ENCODE measurements at regions of chr20 and their contacts with region 1.

Region 1: DNA sequence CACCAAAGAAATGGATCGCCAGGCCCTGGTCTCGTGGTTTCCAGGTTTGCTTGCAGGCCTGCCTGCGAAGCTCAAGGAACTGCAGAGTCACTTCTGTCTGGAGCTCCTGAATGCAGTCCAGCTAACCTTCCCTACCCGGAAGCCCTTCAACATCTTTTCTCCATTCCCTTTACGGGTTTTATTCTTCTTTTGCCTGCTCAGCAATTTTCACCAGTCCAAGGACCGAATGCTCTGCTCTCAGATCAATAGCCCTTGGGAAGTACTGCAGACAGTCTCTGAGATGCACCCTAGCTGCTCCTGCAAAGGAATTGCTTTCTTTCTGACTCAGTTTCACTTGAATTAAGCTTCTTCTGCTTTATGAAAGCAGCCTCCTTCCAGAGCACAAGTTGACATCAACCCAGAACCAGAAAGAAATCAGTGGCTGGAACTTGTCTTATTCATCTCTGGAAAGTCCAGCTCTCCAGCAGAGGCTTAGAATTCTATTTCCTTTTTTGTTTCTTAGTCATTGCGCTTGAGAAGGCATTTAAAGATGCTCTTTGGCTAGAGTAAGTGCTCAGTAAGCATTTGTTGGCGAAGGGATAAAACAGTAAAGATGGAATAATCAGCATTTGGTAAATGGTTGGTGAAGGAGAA is 18.7 kb upstream of the YWHAB start:
- DNase-seq: no peak
- ATAC-seq: no peak
- H3K4me3 Mint-ChIP-seq: peak overlapping the region; percentile 52
- H3K27ac Mint-ChIP-seq: no peak overlapping the region
- H3K4me1 Mint-ChIP-seq: peaks cover 12% of the 10 kb centered on the region
- H3K27me3 Mint-ChIP-seq: peaks cover 3% of the 10 kb centered on the region
- CTCF ChIP-seq: no peak

Region 2: GRCh38 chr20:44800398-44801046 is 66.3 kb before region 1 on chr20:
- CTCF ChIA-PET with region 1: interaction called, 20 read pairs
- POLR2A ChIA-PET with region 1: no interaction called
- intact Hi-C with region 1: loop called (anchors 5 kb)
- DNase-seq: peak; percentile 59
- ATAC-seq: no peak
- H3K4me3 Mint-ChIP-seq: no peak overlapping the region
- H3K27ac Mint-ChIP-seq: no peak overlapping the region
- H3K4me1 Mint-ChIP-seq: no peaks in the 10 kb centered on the region
- H3K27me3 Mint-ChIP-seq: peaks cover 11% of the 10 kb centered on the region
- CTCF ChIP-seq: peak; percentile 31

Region 3: GRCh38 chr20:44805979-44806620 is 60.7 kb before region 1 on chr20:
- CTCF ChIA-PET with region 1: interaction called, 20 read pairs
- POLR2A ChIA-PET with region 1: no interaction called
- intact Hi-C with region 1: loop called (anchors 5 kb)
- DNase-seq: no peak
- ATAC-seq: no peak
- H3K4me3 Mint-ChIP-seq: no peak overlapping the region
- H3K27ac Mint-ChIP-seq: no peak overlapping the region
- H3K4me1 Mint-ChIP-seq: no peaks in the 10 kb centered on the region
- H3K27me3 Mint-ChIP-seq: peaks cover 42% of the 10 kb centered on the region
- CTCF ChIP-seq: no peak

Measured in activated CD8-positive, alpha-beta T cell treated with anti-CD3 and anti-CD28 coated beads for 36 hours (primary cell).